WTC11 (cell line): ENCODE measurements at regions of chr22 and their contacts with region 1.

Region 1: GRCh38 chr22:35627264-35628041 is 10.3 kb upstream of the MB start:
- DNase-seq: peak; percentile 70
- ATAC-seq: peak; percentile 58
- H3K4me3 Mint-ChIP-seq: peak overlapping the region; percentile 80
- H3K27ac Mint-ChIP-seq: peak overlapping the region; percentile 20
- H3K4me1 Mint-ChIP-seq: peaks cover 28% of the 10 kb centered on the region
- H3K27me3 Mint-ChIP-seq: peaks cover 3% of the 10 kb centered on the region; the same call in 1 of the 2 replicates
- CTCF ChIP-seq: no peak

Region 2: GRCh38 chr22:35231585-35232084 is 395.8 kb before region 1 on chr22:
- CTCF ChIA-PET with region 1: no interaction called
- POLR2A ChIA-PET with region 1: no interaction called
- DNase-seq: peak; percentile 85
- ATAC-seq: peak; percentile 95
- H3K4me3 Mint-ChIP-seq: no peak overlapping the region
- H3K27ac Mint-ChIP-seq: no peak overlapping the region
- H3K4me1 Mint-ChIP-seq: peaks cover 31% of the 10 kb centered on the region
- H3K27me3 Mint-ChIP-seq: peaks cover 21% of the 10 kb centered on the region
- CTCF ChIP-seq: peak; percentile 99

Region 3: GRCh38 chr22:35582861-35583670 is 44.4 kb before region 1 on chr22:
- CTCF ChIA-PET with region 1: no interaction called
- POLR2A ChIA-PET with region 1: no interaction called
- DNase-seq: peak; percentile 65
- ATAC-seq: peak; percentile 86
- H3K4me3 Mint-ChIP-seq: no peak overlapping the region
- H3K27ac Mint-ChIP-seq: no peak overlapping the region
- H3K4me1 Mint-ChIP-seq: no peaks in the 10 kb centered on the region
- H3K27me3 Mint-ChIP-seq: no peaks in the 10 kb centered on the region
- CTCF ChIP-seq: peak; percentile 94

Region 4: GRCh38 chr22:35641494-35642120 is 14.2 kb after region 1 on chr22:
- CTCF ChIA-PET with region 1: interaction called, 14 read pairs
- POLR2A ChIA-PET with region 1: no interaction called
- DNase-seq: no peak
- ATAC-seq: no peak
- H3K4me3 Mint-ChIP-seq: no peak overlapping the region
- H3K27ac Mint-ChIP-seq: no peak overlapping the region
- H3K4me1 Mint-ChIP-seq: peaks cover 40% of the 10 kb centered on the region
- H3K27me3 Mint-ChIP-seq: no peaks in the 10 kb centered on the region; the same call in 1 of the 2 replicates
- CTCF ChIP-seq: no peak

Region 5: DNA sequence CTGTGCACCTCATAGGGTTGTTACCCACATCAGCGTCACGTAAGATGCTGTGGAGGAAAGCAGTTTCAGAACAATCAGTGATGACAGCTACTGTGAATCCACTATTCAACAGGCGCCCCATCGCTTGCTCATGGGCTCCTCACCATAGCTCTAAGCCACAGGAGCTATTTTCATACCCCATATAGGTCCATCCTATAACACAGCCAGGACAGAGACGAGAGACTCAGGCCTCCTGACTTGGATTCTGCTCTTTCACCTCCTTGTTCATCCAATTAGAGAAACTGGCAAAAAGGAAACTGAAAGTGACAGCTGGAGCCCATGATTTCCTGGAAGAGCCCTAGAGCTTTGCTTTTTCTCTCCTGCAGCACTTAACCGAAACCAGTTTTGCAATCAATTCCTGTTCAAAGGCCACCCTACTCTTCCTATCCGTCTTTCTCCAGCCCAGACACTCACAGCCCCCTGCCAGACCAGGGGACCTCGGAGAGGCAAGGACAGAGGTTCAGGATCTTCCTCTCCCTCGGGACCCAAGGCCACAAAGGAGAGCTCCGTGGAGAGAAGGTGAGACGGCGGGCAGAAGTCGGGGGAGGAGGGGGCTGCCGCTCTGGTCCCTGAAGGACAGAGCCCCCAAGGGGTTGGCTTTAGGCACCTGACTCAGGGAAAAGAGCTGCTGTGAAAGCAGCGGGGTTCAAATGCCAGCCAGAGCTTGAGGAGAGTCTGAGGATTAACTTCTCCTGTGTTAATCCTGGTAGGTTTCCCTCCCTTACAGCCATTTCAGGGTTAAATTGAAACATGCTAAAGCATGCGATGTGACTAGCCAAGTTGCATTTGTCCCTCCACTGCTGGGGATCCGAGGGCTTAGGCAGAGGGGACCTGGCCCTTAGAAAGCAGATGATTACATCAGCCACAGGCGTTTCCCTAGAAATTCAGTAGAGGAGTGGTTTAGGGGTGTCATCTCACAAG is 20.9 kb after region 1 on chr22 and contains the start of gene APOL6:
- CTCF ChIA-PET with region 1: interaction called, 11 read pairs
- POLR2A ChIA-PET with region 1: interaction called, 3 read pairs
- DNase-seq: no peak
- ATAC-seq: peak; percentile 61
- H3K4me3 Mint-ChIP-seq: no peak within 1 kb of the TSS
- H3K27ac Mint-ChIP-seq: peak within 1 kb of the TSS; percentile 69; the same call in 1 of the 2 replicates
- H3K4me1 Mint-ChIP-seq: peaks cover 17% of the 10 kb centered on the region
- H3K27me3 Mint-ChIP-seq: peaks cover 5% of the 10 kb centered on the region
- CTCF ChIP-seq: no peak
- total RNA-seq, gene APOL6: 0.17 to 0.27 TPM (median 0.21 TPM) in 3 replicates

Region 6: DNA sequence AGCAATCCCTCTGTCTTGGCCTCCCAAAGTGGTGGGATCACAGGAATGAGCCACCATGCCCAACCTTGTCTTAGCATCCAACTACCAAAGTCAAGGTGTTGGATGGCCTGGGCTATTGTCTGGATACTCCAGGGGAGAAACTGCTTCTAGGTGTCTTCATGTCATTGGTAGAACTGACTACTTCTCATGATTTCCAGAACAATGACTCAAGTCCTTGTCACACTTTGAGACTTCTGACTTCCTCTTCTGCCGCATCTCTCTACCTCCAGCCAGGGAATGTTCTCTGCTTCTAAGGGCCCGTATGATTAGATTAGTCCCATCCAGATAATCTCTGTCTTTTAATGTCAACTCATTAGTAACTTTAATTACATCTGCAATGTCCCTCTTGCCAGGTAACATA is 51.4 kb after region 1 on chr22:
- CTCF ChIA-PET with region 1: interaction called, 19 read pairs
- POLR2A ChIA-PET with region 1: no interaction called
- DNase-seq: no peak
- ATAC-seq: no peak
- H3K4me3 Mint-ChIP-seq: no peak overlapping the region
- H3K27ac Mint-ChIP-seq: no peak overlapping the region
- H3K4me1 Mint-ChIP-seq: peaks cover 26% of the 10 kb centered on the region
- H3K27me3 Mint-ChIP-seq: peaks cover 3% of the 10 kb centered on the region; the same call in 1 of the 2 replicates
- CTCF ChIP-seq: no peak

Region 7: DNA sequence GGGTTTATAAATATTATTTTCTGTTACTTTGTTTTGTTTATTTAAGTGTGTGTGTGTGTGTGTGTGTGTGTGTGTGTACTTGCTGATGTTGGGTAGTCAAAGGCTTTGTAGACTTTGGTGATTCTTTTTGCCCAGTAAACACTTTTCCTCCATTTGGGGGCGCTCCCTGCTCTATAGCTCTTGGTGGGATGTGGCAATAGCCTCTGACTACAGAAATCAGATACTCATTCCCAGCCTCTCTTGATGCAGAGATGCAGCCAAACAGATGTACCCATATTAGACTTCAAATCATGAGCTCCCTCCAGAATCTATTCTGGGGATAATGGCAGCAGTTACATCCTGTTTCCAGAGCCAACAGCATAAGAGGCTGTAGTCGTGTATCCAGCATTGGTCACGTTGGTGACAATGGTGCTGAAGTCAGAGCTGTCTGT is 56.8 kb after region 1 on chr22:
- CTCF ChIA-PET with region 1: interaction called, 19 read pairs
- POLR2A ChIA-PET with region 1: no interaction called
- DNase-seq: peak; percentile 39
- ATAC-seq: peak; percentile 63
- H3K4me3 Mint-ChIP-seq: no peak overlapping the region
- H3K27ac Mint-ChIP-seq: no peak overlapping the region
- H3K4me1 Mint-ChIP-seq: no peaks in the 10 kb centered on the region
- H3K27me3 Mint-ChIP-seq: peaks cover 3% of the 10 kb centered on the region; the same call in 1 of the 2 replicates
- CTCF ChIP-seq: no peak

Region 8: DNA sequence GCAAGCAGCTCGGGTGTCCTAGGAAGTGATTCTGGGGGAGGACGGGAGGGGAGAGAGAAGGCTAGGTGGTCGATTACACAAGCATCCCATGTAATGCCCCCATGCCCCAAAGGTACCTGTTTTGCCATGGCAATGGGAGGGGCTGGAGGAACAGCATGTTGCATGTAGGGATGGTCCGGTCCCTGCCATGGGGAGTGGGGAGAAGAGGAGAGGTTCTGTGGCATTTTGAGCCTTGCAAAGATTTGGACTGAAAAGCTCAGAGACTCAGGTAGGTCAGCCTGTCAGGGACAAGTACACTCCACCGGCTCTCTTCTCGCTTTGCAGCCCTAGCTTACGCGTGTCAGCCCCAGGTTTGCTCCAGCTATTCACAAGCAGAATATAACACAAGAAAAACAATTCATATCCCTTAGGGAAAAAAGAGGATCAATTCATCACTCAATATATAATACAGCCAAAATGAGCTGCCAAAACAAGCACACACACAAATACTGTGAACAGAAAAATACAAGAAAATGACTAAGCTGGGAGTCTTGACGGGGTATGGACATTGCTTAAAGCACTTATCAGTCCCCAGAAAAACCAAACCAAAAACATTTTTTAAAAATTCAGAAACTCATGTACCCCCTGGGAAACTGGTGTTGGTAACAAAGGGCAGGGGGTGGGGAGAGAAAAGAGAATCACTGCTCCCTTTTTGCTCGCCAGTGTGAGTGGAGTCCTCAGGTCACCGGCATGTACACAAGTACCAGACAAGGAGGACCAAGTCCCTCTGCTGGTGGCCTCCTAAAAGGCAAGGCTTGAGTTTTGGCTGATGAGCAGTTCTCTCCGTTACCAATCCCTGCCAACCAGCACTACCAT is 111.8 kb after region 1 on chr22:
- CTCF ChIA-PET with region 1: interaction called, 11 read pairs
- POLR2A ChIA-PET with region 1: no interaction called
- DNase-seq: no peak
- ATAC-seq: peak; percentile 76
- H3K4me3 Mint-ChIP-seq: no peak overlapping the region
- H3K27ac Mint-ChIP-seq: peak overlapping the region; percentile 48; the same call in 1 of the 2 replicates
- H3K4me1 Mint-ChIP-seq: peaks cover 29% of the 10 kb centered on the region
- H3K27me3 Mint-ChIP-seq: no peaks in the 10 kb centered on the region
- CTCF ChIP-seq: no peak